Naive thymus-derived CD4-positive, alpha-beta T cell (primary cell): ENCODE measurements at regions of chr1 and their contacts with region 1.

Region 1: DNA sequence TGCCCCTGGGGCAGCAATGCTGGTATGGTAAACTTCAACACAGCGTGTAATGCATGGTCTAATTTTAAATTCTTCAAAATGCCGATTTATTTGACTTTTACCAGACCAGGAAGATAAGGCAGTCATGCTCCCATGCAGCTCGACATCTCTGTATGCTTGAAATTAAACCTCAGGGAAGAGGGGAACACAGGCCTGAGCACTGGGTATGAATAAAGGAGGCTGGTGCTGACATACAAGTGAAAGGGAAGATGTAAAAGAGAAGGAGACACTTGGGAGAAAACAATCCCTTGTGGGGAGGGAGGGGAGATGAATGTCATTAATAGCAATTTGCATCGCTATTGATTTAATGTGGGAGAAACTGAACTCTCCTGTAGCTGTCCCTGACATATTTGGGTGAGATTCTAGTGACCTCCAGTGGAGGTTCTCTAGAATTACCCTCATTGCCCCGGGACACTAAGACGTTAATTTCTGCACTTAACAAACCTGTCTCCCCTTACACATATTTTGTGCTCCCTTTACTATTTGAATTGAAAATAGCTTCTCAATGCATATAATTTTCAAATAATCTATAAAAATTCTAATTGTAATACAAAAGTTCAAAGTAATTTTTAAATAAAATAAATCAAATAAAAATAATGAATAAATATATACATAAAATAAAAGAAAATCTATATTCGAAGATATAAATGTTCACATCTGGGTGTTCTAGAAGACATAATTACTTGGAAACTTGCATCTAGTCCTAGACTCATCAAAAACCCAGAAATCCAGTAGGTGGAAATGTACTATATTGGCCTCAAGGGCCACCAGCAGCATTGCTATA is 283.1 kb downstream of the LMX1A start:
- DNase-seq: no peak
- ATAC-seq: no peak
- H3K4me3 ChIP-seq: no peak overlapping the region
- H3K4me3 Mint-ChIP-seq: no peak overlapping the region
- H3K27ac ChIP-seq: no peak overlapping the region
- H3K27ac Mint-ChIP-seq: no peak overlapping the region
- H3K4me1 ChIP-seq: no peaks in the 10 kb centered on the region
- H3K4me1 Mint-ChIP-seq: no peaks in the 10 kb centered on the region
- H3K27me3 ChIP-seq: no peaks in the 10 kb centered on the region
- H3K27me3 Mint-ChIP-seq: peaks cover 0 to 22% (median 0%) of the 10 kb centered on the region in 5 donors

Region 2: GRCh38 chr1:163361123-163361934 is 1712.1 kb before region 1 on chr1:
- CTCF ChIA-PET with region 1: no interaction called
- POLR2A ChIA-PET with region 1: no interaction called
- intact Hi-C with region 1: loop called in 1 of 2 experiments (anchors 2 kb)
- DNase-seq: no peak
- ATAC-seq: no peak
- H3K4me3 ChIP-seq: no peak overlapping the region
- H3K4me3 Mint-ChIP-seq: peak overlapping the region in 1 of 10 donors; percentile 52
- H3K27ac ChIP-seq: no peak overlapping the region
- H3K27ac Mint-ChIP-seq: no peak overlapping the region
- H3K4me1 ChIP-seq: no peaks in the 10 kb centered on the region
- H3K4me1 Mint-ChIP-seq: peaks cover 0 to 6% (median 4%) of the 10 kb centered on the region in 7 donors
- H3K27me3 ChIP-seq: no peaks in the 10 kb centered on the region
- H3K27me3 Mint-ChIP-seq: peaks cover 0 to 24% (median 15%) of the 10 kb centered on the region in 5 donors